AG04450 (cell line): ENCODE measurements at regions of chr18 and their contacts with region 1.

Region 1: GRCh38 chr18:73842795-73843394 is 304.7 kb downstream of the FBXO15 start:
- DNase-seq: peak; percentile 23
- H3K4me3 ChIP-seq: no peak overlapping the region
- H3K27ac ChIP-seq: no peak overlapping the region
- H3K27me3 ChIP-seq: no peaks in the 10 kb centered on the region
- CTCF ChIP-seq: peak; percentile 99

Region 2: DNA sequence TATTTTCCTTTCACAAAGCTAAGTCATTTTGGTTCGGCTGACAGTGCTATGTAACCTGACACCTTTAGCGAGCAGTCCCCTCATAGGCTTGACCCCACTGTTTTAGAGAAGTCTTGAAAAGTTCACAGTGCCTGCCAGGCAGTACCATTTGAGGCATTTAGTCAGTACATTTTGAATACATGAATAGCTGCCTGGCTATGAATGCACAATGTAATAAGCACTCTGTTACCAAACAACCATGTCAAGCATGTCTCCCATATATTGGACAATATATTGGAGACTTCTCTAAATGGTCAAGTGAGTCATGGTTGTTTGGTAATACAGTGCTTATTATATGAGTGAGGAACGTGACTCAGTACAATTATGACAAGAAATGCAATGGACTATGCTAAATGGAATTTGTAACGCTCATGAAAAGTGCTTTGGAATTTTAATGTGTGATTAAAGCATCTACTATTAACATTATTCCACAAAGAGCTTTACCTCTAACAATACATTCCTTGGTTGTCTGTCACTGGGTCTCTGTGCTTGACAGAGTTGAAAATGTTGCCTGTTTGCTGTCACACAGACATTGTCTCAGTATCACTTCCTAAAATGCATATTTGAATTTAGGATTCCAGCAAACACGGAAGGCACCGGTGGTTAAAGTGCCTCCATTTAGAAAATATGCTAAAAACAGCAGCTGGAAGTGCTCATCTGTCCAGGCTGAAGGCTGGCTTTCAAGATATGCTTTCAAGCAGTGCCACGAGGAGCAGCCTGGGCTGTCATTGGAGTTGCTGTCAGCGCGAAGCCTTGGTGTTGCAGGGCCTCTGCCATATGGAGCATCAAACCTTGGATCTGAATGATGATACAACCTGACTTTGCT is 153.8 kb before region 1 on chr18:
- CTCF ChIA-PET with region 1: interaction called, 13 read pairs
- POLR2A ChIA-PET with region 1: no interaction called
- DNase-seq: peak; percentile 86
- H3K4me3 ChIP-seq: peak overlapping the region; percentile 52
- H3K27ac ChIP-seq: peak overlapping the region; percentile 96
- H3K27me3 ChIP-seq: no peaks in the 10 kb centered on the region
- CTCF ChIP-seq: no peak

Region 3: GRCh38 chr18:73812423-73812822 is 30.5 kb before region 1 on chr18:
- CTCF ChIA-PET with region 1: interaction called, 11 read pairs
- POLR2A ChIA-PET with region 1: no interaction called
- DNase-seq: no peak
- H3K4me3 ChIP-seq: no peak overlapping the region
- H3K27ac ChIP-seq: no peak overlapping the region
- H3K27me3 ChIP-seq: no peaks in the 10 kb centered on the region
- CTCF ChIP-seq: no peak

Region 4: DNA sequence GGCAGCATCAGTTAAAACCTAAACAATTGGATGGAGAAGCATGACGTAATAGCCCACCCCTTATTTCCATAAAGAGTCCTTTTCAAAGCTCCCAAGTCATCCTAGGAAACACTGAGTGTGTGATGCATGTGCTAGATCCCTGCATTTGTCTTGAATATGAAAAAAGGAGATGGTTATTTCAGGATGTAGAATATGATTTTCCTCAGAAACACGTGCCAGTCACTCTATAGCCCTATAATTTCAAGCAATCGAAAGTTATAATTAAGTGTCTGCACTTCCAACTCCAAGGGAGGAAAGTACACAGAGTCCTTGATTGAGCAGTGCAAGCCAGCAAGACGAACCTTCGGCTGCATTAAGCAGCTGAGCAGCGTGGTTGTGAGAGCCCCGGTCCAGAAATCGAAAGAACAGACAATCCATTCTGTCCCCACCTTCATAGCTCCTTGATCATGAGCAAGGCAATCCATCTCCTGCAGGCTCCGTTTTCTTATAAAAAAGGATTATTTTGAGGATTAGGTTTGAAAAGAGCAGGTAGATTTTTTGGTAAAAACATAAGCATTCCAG is 17.0 kb after region 1 on chr18:
- CTCF ChIA-PET with region 1: interaction called, 14 read pairs
- POLR2A ChIA-PET with region 1: no interaction called
- DNase-seq: no peak
- H3K4me3 ChIP-seq: no peak overlapping the region
- H3K27ac ChIP-seq: no peak overlapping the region
- H3K27me3 ChIP-seq: peaks cover 3% of the 10 kb centered on the region
- CTCF ChIP-seq: no peak